MCF 10A (cell line): ENCODE measurements at regions of chr1 and their contacts with region 1.

Region 1: DNA sequence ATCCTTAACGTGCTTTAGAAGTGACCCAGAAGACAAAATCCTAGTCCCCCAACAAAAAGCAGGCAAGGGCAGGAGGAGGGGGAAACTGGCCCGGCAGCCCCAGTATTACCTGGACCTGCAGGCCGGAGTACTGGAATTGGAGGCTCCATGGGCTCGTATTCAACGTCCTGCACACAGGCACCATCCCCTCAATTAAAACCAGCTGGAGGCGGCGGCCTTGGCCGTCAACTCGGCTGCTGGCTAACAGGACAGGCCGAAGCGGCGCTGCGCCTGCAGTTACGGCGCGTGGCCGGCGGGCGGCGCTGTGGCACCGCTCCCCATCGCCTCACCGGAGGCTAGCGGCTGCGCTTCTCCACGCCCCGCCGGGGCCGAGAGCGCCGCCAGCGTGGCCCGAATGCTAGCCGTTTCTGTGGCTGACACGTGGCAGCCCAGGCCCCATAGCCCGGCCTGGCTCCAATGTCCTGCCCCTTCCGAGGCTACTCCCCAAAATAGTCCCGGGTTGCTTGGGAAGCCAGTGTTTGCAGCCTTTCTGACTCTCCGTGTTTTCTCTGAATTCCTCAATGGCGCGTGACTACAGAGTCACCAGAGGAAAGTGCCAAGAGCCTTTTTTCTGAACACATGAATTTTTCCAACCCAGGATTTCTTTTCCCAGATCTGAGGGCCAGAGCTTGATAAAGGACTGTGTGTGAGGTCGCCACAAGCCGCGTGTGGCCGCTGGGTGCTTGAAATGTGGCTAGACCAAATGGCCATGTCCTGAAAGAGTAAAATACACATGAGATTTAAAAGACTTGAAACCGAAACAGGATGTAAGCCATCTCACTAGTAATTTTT is 82.5 kb downstream of the HHIPL2 start:
- DNase-seq: peak; percentile 98
- H3K4me3 Mint-ChIP-seq: peak overlapping the region; percentile 67
- H3K27ac Mint-ChIP-seq: peak overlapping the region; percentile 92
- H3K4me1 Mint-ChIP-seq: peaks cover 14% of the 10 kb centered on the region
- H3K27me3 Mint-ChIP-seq: no peaks in the 10 kb centered on the region
- CTCF ChIP-seq: peak; percentile 100

Region 2: GRCh38 chr1:222370081-222370912 is 95.1 kb before region 1 on chr1:
- CTCF ChIA-PET with region 1: no interaction called
- POLR2A ChIA-PET with region 1: no interaction called
- intact Hi-C with region 1: no loop called
- DNase-seq: peak; percentile 78
- H3K4me3 Mint-ChIP-seq: no peak overlapping the region
- H3K27ac Mint-ChIP-seq: peak overlapping the region; percentile 94
- H3K4me1 Mint-ChIP-seq: peaks cover 20% of the 10 kb centered on the region
- H3K27me3 Mint-ChIP-seq: no peaks in the 10 kb centered on the region
- CTCF ChIP-seq: no peak

Region 3: GRCh38 chr1:222382171-222382570 is 83.3 kb before region 1 on chr1:
- CTCF ChIA-PET with region 1: no interaction called
- POLR2A ChIA-PET with region 1: no interaction called
- intact Hi-C with region 1: no loop called
- DNase-seq: peak; percentile 24
- H3K4me3 Mint-ChIP-seq: no peak overlapping the region
- H3K27ac Mint-ChIP-seq: no peak overlapping the region
- H3K4me1 Mint-ChIP-seq: no peaks in the 10 kb centered on the region
- H3K27me3 Mint-ChIP-seq: no peaks in the 10 kb centered on the region
- CTCF ChIP-seq: no peak

Region 4: DNA sequence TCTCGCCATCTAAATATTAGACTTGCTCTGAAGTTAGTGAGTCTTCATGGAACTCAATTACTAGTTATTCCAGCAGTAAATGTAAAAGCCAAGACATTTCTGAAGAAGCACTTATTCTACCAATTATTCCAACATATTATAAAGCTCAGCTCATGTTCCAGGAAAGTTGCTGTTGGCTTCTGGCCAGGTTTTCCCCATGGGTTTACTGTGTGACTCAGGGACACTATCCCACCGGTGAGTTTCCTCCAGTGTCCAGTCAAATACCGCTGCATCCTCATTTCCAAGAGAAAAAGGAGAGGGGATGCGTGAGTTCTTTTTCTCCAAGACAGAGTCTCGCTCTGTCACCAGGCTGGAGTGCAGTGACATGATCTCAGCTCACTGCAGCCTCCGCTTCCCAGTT is 91.7 kb after region 1 on chr1:
- CTCF ChIA-PET with region 1: interaction called, 13 read pairs
- POLR2A ChIA-PET with region 1: no interaction called
- intact Hi-C with region 1: no loop called
- DNase-seq: peak; percentile 32
- H3K4me3 Mint-ChIP-seq: no peak overlapping the region
- H3K27ac Mint-ChIP-seq: no peak overlapping the region
- H3K4me1 Mint-ChIP-seq: no peaks in the 10 kb centered on the region
- H3K27me3 Mint-ChIP-seq: no peaks in the 10 kb centered on the region
- CTCF ChIP-seq: no peak

Region 5: DNA sequence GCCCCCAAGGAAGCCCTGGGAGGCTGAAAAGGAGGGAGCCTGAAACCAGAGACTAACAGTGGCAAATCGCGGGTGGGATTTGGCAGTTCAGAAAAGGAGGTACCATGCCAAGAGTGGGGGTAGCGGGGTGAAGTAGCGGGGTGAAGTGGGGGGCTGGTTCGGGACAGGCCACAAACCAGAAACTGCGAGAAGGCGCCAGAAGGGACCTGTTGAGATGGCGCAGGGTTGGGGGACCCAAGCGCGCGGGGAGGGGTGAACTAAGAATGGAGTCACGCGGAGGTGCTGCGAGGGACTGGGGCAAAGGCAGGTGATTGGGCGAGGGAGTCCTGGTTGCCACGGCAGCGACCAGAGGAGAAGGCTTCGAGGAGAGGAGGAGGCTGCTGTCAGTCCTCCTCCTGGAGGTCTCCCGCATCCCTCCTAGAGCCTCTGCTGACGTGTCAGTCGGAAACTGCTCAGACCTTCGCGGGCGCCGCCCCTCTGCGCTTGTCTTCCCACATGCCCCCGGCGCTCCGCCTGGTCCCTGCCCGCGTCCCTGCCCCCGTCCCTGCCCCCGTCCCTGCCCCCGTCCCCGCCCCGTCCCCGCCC is 152.0 kb after region 1 on chr1:
- CTCF ChIA-PET with region 1: interaction called, 59 read pairs
- POLR2A ChIA-PET with region 1: interaction called, 20 read pairs
- intact Hi-C with region 1: no loop called
- DNase-seq: peak; percentile 96
- H3K4me3 Mint-ChIP-seq: peak overlapping the region; percentile 79
- H3K27ac Mint-ChIP-seq: peak overlapping the region; percentile 46
- H3K4me1 Mint-ChIP-seq: peaks cover 27% of the 10 kb centered on the region
- H3K27me3 Mint-ChIP-seq: peaks cover 26% of the 10 kb centered on the region
- CTCF ChIP-seq: no peak

Region 6: DNA sequence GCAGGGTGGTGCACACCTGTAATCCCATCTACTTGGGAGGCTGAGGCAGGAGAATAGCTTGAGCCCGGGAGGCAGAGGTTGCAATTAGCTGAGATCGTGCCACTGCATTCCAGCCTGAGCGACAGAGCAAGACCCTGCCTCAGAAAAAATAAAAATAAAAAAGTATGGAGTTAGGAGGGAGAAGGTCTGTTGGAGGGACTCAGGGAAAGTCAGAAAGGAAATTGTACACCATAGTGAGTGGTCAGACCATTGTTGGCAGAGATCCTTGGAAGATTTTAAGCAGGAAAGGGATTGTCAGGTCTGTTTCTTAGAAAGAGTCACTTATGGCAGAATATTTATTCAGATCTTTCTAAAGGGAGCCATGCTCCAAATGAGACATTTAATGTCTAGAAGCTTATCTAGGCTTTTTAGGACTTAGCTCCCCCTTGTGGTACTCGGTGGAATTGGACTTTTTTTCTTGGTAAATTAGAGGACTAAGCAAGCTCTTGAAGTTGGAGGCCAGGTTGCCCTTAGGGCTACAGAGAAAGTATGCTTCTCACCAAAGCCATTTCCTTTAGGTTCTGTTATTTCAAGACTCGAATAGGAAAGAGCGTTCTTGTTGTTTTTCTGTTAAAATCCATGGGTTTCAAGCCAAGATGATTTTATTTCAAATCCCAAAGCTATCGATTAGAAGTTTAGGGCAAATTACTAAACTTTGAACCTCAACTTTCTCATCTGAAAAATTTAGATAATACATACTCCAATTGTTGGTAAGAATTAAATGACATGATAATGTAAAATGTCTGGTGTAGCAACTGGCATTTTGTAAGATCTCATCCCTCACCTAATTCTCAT is 169.0 kb after region 1 on chr1:
- CTCF ChIA-PET with region 1: interaction called, 201 read pairs
- POLR2A ChIA-PET with region 1: interaction called, 55 read pairs
- intact Hi-C with region 1: loop called (anchors 1 kb)
- DNase-seq: peak; percentile 97
- H3K4me3 Mint-ChIP-seq: no peak overlapping the region
- H3K27ac Mint-ChIP-seq: peak overlapping the region; percentile 55
- H3K4me1 Mint-ChIP-seq: peaks cover 6% of the 10 kb centered on the region
- H3K27me3 Mint-ChIP-seq: no peaks in the 10 kb centered on the region
- CTCF ChIP-seq: peak; percentile 97

Region 7: GRCh38 chr1:222654849-222655248 is 189.4 kb after region 1 on chr1:
- CTCF ChIA-PET with region 1: interaction called, 10 read pairs
- POLR2A ChIA-PET with region 1: interaction called, 3 read pairs
- intact Hi-C with region 1: no loop called
- DNase-seq: no peak
- H3K4me3 Mint-ChIP-seq: no peak overlapping the region
- H3K27ac Mint-ChIP-seq: peak overlapping the region; percentile 1
- H3K4me1 Mint-ChIP-seq: no peaks in the 10 kb centered on the region
- H3K27me3 Mint-ChIP-seq: no peaks in the 10 kb centered on the region
- CTCF ChIP-seq: no peak

Region 8: DNA sequence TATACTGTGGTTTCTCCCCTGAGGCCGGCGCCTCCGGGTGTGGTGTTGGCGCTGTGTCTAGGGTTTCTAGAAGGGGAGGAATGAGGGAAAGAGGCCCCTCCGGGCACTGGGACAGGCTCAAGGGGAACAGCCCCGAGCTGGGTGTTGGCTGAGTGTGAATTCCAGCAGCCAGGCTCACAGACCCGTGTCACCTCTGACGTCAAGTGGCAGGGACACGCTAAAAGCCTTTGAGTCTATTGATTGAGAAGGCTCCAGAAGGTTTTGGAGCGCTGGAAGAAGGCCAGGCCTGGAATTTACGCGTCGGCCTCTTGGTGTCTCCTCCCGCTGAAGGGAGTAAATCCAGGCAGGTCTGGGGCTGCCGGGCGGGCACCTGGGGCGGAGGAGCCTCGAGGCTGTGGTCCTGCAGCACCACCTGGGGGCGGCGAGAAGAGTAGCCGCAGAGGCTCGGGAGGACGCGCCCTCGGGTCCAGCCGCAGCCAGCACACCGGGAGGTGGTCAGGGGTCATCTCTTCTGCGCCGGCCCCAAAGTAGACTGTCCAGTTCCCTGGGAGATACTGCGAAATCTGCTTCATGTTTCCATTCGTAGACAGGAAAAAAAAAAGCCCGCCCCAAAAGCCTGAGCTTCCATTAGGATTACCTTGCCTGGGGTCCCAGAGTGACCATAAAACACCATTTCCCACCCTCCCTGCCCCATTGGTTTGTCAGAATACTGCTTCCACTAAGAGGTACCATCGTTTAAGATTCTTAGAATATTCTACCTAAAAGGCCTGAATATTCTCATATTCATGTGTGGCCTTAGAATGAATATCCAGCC is 616.0 kb after region 1 on chr1:
- CTCF ChIA-PET with region 1: interaction called, 3 read pairs
- POLR2A ChIA-PET with region 1: no interaction called
- intact Hi-C with region 1: loop called (anchors 1 kb)
- DNase-seq: peak; percentile 100
- H3K4me3 Mint-ChIP-seq: peak overlapping the region; percentile 59
- H3K27ac Mint-ChIP-seq: peak overlapping the region; percentile 96
- H3K4me1 Mint-ChIP-seq: no peaks in the 10 kb centered on the region
- H3K27me3 Mint-ChIP-seq: peaks cover 33% of the 10 kb centered on the region
- CTCF ChIP-seq: peak; percentile 100